Thyroid gland (tissue), 4 donors: ENCODE measurements at regions of chr10 and their contacts with region 1.

Region 1: DNA sequence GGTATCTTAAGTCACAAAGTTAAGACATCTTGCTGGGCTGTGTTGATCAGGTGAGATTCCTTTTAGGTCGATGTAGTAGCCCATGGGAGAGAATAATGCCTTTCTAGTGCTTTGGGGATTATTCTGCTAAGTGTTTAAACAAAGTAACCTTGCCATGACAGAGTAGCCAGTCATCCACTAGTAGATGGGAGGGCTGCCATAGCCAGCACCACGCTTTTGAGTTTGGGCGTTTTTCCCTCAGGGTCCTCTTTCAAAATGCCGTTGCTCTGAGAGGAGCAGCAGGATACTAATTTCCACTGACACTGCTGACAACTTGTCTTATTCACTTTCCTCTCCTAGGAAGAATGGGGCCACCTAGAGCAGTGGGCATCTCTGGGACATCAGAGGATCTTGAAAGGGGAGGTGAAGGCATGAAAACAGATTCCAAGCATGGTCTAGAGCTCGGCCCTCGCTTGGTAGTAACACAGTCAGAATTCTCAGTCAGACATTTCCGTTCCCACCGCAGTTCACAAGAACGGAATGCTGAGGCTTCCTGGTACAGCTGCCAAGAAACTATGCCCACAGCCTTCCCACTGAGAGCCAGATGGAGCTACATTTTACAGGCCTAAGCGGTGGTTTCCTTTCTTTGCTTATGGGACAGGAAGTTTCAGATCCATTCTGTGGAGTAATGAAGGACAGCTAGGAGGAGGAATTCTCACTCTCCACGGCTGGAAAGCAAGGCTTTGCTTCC is 15.3 kb upstream of the RSU1 start:
- DNase-seq: peak in 1 of 2 donors; percentile 9
- H3K4me3 ChIP-seq: no peak overlapping the region
- H3K27ac ChIP-seq: peak overlapping the region; percentile 28 to 50 (median 40)
- H3K4me1 ChIP-seq: no peaks in the 10 kb centered on the region
- H3K27me3 ChIP-seq: no peaks in the 10 kb centered on the region
- CTCF ChIP-seq: no peak
- POLR2A ChIP-seq: no peak

Region 2: DNA sequence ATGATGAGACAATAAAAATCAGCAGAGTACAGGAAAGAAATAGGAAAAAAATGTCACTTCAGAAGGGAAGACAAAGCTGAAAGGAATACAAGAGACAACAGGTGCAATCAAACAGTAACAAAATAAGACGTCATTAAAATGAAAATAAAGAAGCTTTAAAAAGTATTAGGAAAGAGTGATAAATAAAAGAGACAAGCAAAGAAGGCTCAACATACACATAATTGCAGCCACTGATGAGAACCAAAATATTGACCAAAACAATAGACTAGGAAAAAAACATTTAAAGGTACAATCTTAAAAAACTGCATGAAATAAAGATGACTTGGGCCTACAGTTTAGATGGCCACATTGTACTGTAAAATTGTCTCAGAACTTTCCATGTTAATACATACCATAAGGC is 811.7 kb before region 1 on chr10:
- intact Hi-C with region 1: no loop called
- DNase-seq: no peak
- H3K4me3 ChIP-seq: no peak overlapping the region
- H3K27ac ChIP-seq: no peak overlapping the region
- H3K4me1 ChIP-seq: no peaks in the 10 kb centered on the region
- H3K27me3 ChIP-seq: no peaks in the 10 kb centered on the region
- CTCF ChIP-seq: no peak
- POLR2A ChIP-seq: no peak

Region 3: GRCh38 chr10:16527452-16527851 is 305.1 kb before region 1 on chr10:
- intact Hi-C with region 1: no loop called
- DNase-seq: no peak
- H3K4me3 ChIP-seq: no peak overlapping the region
- H3K27ac ChIP-seq: no peak overlapping the region
- H3K4me1 ChIP-seq: no peaks in the 10 kb centered on the region
- H3K27me3 ChIP-seq: no peaks in the 10 kb centered on the region
- CTCF ChIP-seq: no peak
- POLR2A ChIP-seq: no peak

Region 4: DNA sequence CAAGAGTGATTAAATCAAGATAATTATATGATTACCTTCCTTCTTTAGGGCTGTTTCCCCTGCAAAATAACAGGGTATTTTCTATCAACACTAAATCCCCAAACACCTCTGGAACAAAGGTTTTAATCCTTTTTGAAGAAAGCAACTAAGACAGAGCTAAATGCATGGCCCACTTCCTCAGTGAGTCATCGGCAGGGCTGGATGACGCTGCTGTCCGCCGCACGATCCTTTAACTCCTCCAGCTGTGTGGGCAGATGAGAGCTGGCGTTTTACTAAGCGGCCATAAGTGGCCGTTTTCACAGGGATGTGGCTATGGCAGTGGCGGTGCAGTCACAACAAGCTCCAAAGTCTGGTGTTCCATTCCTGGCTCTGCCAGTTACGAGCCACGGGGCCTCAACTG is 234.9 kb before region 1 on chr10:
- intact Hi-C with region 1: no loop called
- DNase-seq: no peak
- H3K4me3 ChIP-seq: no peak overlapping the region
- H3K27ac ChIP-seq: no peak overlapping the region
- H3K4me1 ChIP-seq: no peaks in the 10 kb centered on the region
- H3K27me3 ChIP-seq: no peaks in the 10 kb centered on the region
- CTCF ChIP-seq: no peak
- POLR2A ChIP-seq: no peak

Region 5: GRCh38 chr10:17430647-17431355 is 598.3 kb after region 1 on chr10:
- intact Hi-C with region 1: loop called (anchors 5 kb)
- DNase-seq: peak; percentile 66 to 76
- H3K4me3 ChIP-seq: no peak overlapping the region
- H3K27ac ChIP-seq: no peak overlapping the region
- H3K4me1 ChIP-seq: no peaks in the 10 kb centered on the region
- H3K27me3 ChIP-seq: no peaks in the 10 kb centered on the region
- CTCF ChIP-seq: peak; percentile 48 to 86 (median 68)
- POLR2A ChIP-seq: no peak